ENCODE measurements at regions of chr11 and their contacts with region 1.

Region 1: DNA sequence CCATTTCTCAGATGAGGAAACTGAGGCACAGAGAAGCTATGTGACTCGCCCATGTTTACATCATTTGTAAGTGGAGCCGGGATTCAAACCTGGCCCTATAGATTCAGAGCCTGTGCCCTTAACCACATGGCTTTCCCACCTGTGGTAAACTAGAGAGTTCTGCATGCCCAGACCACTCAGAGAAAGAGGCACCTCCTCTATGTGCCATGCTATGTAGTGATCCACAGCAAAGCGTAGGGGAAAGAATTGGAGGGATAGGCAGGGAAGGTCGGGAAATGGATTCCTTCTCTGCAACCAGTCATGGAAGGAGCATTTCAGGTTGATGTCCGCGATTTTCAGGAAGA is 15.4 kb upstream of the POU2AF2 start:
- DNase-seq: no peak
- H3K4me3 Mint-ChIP-seq: no peak overlapping the region
- H3K27ac Mint-ChIP-seq: no peak overlapping the region
- H3K4me1 Mint-ChIP-seq: peaks cover 12% of the 10 kb centered on the region
- H3K27me3 Mint-ChIP-seq: peaks cover 24% of the 10 kb centered on the region

Region 2: GRCh38 chr11:110199184-110199941 is 1030.7 kb before region 1 on chr11:
- CTCF ChIA-PET with region 1: interaction called, 4 read pairs
- intact Hi-C with region 1: loop called (anchors 2 kb)
- DNase-seq: no peak
- H3K4me3 Mint-ChIP-seq: no peak overlapping the region
- H3K27ac Mint-ChIP-seq: no peak overlapping the region
- H3K4me1 Mint-ChIP-seq: no peaks in the 10 kb centered on the region
- H3K27me3 Mint-ChIP-seq: no peaks in the 10 kb centered on the region

Region 3: GRCh38 chr11:110447897-110448745 is 782.0 kb before region 1 on chr11:
- CTCF ChIA-PET with region 1: interaction called, 6 read pairs
- intact Hi-C with region 1: loop called (anchors 1 kb)
- DNase-seq: no peak
- H3K4me3 Mint-ChIP-seq: no peak overlapping the region
- H3K27ac Mint-ChIP-seq: no peak overlapping the region
- H3K4me1 Mint-ChIP-seq: peaks cover 20% of the 10 kb centered on the region
- H3K27me3 Mint-ChIP-seq: no peaks in the 10 kb centered on the region

Region 4: DNA sequence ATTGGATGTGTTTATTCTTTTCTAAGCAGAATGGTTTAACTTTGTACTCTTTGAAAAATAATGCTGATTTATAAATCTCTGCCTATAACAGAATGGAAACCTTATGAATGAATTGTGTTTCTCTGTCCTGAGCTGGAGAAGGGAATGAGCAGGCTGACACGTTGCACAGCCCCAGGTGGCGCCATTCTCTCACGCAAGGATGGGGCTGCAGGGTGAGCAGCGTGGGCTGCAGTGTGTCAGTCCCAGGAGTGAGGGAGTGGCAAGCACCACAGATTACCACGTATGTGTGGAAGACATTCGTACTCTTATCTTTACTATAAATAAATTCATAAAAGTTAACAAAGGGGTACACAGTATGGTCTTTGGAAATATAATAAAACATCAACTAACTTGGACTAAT is 766.9 kb before region 1 on chr11:
- CTCF ChIA-PET with region 1: interaction called, 6 read pairs
- intact Hi-C with region 1: loop called (anchors 1 kb)
- DNase-seq: peak; percentile 52
- H3K4me3 Mint-ChIP-seq: no peak overlapping the region
- H3K27ac Mint-ChIP-seq: no peak overlapping the region
- H3K4me1 Mint-ChIP-seq: no peaks in the 10 kb centered on the region
- H3K27me3 Mint-ChIP-seq: no peaks in the 10 kb centered on the region

Region 5: GRCh38 chr11:110711776-110712658 is 518.1 kb before region 1 on chr11 and contains the start of gene ARHGAP20:
- CTCF ChIA-PET with region 1: no interaction called
- intact Hi-C with region 1: loop called (anchors 1 kb)
- DNase-seq: peak; percentile 59
- H3K4me3 Mint-ChIP-seq: peak within 1 kb of the TSS; percentile 70
- H3K27ac Mint-ChIP-seq: no peak within 1 kb of the TSS
- H3K4me1 Mint-ChIP-seq: peaks cover 14% of the 10 kb centered on the region
- H3K27me3 Mint-ChIP-seq: peaks cover 48% of the 10 kb centered on the region
- total RNA-seq, gene ARHGAP20: 0.19 to 0.22 TPM

Region 6: DNA sequence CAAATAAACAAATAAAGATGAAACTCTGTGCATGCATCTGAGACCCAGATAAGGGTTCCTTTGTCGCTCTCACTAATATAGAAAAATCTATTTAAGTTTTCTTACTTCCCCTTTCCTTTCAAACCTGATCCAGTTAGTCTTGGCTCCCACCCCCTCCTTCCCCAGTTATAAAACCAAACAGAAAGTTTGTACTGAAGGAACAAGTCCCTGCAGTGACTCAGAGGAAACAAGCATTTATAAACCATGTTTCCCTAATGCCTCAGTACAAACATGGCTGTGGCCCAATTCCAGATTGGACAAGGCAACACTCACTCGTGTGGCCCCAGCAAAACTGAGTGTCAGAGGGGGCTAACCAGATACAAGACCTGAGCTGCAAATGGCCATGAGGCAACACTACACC is 452.3 kb before region 1 on chr11:
- CTCF ChIA-PET with region 1: no interaction called
- intact Hi-C with region 1: loop called (anchors 10 kb)
- DNase-seq: no peak
- H3K4me3 Mint-ChIP-seq: no peak overlapping the region
- H3K27ac Mint-ChIP-seq: no peak overlapping the region
- H3K4me1 Mint-ChIP-seq: no peaks in the 10 kb centered on the region
- H3K27me3 Mint-ChIP-seq: no peaks in the 10 kb centered on the region

Region 7: DNA sequence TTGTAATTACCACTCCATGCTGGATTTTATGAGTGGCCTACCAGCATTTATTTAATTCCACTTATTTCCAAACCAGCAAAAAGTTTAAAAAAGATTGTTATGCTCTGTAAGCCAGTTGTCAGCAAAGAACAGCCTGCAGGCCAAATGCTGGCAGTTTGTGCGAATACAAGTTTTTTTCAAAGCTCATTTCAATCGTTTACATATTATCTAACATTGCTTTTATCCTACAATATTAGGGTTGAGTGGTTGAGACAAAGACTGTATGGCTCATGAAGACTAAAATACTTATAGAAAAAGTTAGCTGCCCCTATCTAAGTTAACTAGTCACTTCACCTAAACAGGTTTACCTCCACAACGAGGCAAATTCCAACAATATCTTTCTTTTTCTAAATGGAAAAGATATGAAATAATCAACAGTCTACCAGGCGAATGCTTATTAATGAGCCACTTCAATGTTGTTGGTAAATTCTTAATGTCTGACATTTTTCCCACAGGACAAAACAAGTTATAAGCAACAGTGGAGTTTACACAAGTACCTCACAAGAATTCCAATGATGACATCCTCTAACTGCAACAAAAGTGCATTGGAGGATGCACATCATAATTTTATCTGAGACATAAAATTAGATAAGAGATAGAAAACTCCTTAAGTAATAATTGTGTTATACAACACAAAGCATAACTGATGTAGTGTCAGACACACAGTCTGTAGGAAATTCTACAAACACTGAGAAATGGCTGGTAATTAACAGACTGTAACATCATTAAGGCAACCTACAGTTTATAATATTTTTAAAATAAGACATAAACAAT is 20.3 kb before region 1 on chr11:
- CTCF ChIA-PET with region 1: no interaction called
- intact Hi-C with region 1: no loop called
- DNase-seq: no peak
- H3K4me3 Mint-ChIP-seq: no peak overlapping the region
- H3K27ac Mint-ChIP-seq: no peak overlapping the region
- H3K4me1 Mint-ChIP-seq: no peaks in the 10 kb centered on the region
- H3K27me3 Mint-ChIP-seq: peaks cover 7% of the 10 kb centered on the region

Region 8: GRCh38 chr11:111344032-111344431 is 113.9 kb after region 1 on chr11:
- CTCF ChIA-PET with region 1: no interaction called
- intact Hi-C with region 1: no loop called
- DNase-seq: no peak
- H3K4me3 Mint-ChIP-seq: no peak overlapping the region
- H3K27ac Mint-ChIP-seq: no peak overlapping the region
- H3K4me1 Mint-ChIP-seq: no peaks in the 10 kb centered on the region
- H3K27me3 Mint-ChIP-seq: no peaks in the 10 kb centered on the region